ENCODE measurements at regions of chr10 and their contacts with region 1.

Region 1: DNA sequence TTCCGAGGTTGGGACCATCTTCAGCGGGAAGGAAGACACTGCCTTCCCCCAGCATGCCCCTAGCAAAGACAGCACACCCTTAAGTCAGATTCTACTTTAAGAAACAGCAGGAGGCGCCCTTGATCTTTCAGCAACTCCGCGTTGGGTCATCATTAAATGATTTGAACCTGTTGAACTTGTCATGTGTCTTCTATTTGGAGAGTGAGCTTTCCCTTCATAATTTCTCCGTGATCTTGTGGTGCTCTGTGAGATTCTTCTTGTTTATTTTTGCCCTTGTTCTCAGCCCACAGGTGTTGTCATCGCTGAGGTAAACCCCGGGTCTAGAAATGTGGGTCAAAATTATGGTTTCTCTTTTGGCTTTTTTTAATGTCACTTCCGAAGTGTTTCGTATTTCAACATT is 49.5 kb upstream of the PITRM1 start:
- DNase-seq: no peak
- ATAC-seq: no peak
- H3K4me3 ChIP-seq: no peak overlapping the region
- H3K4me1 ChIP-seq: no peaks in the 10 kb centered on the region
- CTCF ChIP-seq: no peak

Region 2: GRCh38 chr10:3424110-3424851 is 202.2 kb after region 1 on chr10:
- intact Hi-C with region 1: no loop called
- DNase-seq: peak in 2 of 3 donors; percentile 31 to 68
- ATAC-seq: peak; percentile 54
- H3K4me3 ChIP-seq: no peak overlapping the region
- H3K4me1 ChIP-seq: peaks cover 31% of the 10 kb centered on the region
- CTCF ChIP-seq: no peak

Region 3: GRCh38 chr10:4109469-4109868 is 887.4 kb after region 1 on chr10:
- intact Hi-C with region 1: loop called in 1 of 2 experiments (anchors 5 kb)
- DNase-seq: no peak
- ATAC-seq: no peak
- H3K4me3 ChIP-seq: no peak overlapping the region
- H3K4me1 ChIP-seq: no peaks in the 10 kb centered on the region
- CTCF ChIP-seq: no peak

Measured in mucosa of descending colon (tissue), 3 donors.